ENCODE measurements at regions of chr21 and their contacts with region 1.

Region 1: GRCh38 chr21:39483924-39484323 is 32.2 kb downstream of the SH3BGR start:
- DNase-seq: no peak
- H3K4me3 ChIP-seq: no peak overlapping the region
- H3K27ac ChIP-seq: no peak overlapping the region
- H3K4me1 ChIP-seq: no peaks in the 10 kb centered on the region
- H3K27me3 ChIP-seq: no peaks in the 10 kb centered on the region
- CTCF ChIP-seq: no peak
- POLR2A ChIP-seq: no peak

Region 2: DNA sequence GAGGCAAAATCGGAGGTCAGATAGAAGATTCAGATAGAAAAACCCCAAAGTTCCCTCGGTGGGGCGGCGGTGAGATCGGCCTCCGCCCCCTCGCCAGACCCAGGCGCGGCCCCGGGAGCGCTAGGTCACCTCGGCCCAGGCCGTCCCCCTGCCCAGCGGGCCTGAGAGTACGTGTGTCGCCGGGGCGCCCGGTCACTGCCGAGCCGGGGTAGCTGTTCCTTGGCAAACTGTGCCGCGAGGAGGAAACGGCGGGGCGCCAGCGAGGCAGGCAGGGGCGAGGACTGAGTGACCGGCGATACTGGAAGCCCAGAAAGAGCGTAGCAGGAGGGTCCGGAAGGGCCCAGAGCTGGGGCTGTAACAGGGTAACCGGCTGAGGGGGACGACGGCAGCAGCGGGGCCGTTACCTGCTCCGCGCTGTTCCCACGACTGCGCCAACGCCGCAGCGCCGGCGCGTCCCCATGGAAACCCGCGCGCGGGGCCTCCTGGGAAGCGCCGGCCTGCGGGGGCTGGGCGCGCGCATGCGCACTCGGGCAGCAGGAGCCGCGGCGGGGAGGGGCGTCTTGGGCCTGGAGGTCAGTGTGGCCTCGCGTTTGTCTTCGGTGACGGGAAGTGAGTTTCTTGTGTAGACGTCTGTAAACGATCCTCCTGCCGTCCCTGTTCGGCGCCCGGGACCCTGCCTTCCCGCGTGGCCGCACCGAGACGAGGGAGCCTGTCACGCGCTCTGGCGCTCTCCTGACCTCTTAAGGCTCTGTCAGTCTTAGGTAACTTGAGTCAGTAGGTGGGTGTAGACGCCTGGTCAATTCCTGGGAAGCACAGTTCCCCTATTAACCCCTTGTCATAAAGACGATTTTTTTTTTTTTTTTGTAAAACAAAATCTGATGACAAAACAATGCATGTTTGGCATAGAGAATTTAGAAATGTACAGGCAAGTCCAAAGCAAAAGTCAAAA is 38.3 kb before region 1 on chr21 and contains the start of gene LCA5L:
- intact Hi-C with region 1: loop called (anchors 2 kb)
- DNase-seq: peak; percentile 83
- H3K4me3 ChIP-seq: peak within 1 kb of the TSS; percentile 66 to 69
- H3K27ac ChIP-seq: peak within 1 kb of the TSS; percentile 83 to 86
- H3K4me1 ChIP-seq: no peaks in the 10 kb centered on the region
- H3K27me3 ChIP-seq: no peaks in the 10 kb centered on the region
- CTCF ChIP-seq: peak in 2 of 4 experiments; percentile 17 to 31
- POLR2A ChIP-seq: peak; percentile 88
- total RNA-seq, gene LCA5L: 3.7 to 11.1 TPM